PC-9 (cell line): ENCODE measurements at regions of chr3 and their contacts with region 1.

Region 1: DNA sequence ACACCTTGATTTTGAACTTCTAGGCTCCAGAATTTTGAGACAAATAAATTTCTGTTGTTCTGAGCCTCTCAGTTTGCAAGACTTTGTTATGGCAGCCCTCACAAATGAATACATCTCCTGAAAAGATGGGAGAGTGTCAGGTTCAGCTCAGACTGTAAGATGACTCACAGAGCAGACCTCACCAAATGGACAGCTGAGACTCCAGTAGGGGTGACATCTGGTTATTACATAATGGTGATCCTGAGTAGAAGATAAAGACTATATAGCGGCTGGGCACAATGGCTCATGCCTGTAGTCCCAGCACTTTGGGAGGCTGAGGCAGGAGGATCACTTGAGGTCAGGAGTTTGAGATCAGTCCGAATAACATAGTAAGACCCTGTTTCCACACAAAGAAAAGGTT is 26.2 kb upstream of the MTMR14 start:
- DNase-seq: peak in 1 of 2 experiments; percentile 52
- H3K4me3 ChIP-seq: no peak overlapping the region
- H3K27ac ChIP-seq: no peak overlapping the region
- H3K4me1 ChIP-seq: peaks cover 10% of the 10 kb centered on the region; the same call in 1 of the 2 replicates
- H3K27me3 ChIP-seq: no peaks in the 10 kb centered on the region
- CTCF ChIP-seq: no peak

Region 2: DNA sequence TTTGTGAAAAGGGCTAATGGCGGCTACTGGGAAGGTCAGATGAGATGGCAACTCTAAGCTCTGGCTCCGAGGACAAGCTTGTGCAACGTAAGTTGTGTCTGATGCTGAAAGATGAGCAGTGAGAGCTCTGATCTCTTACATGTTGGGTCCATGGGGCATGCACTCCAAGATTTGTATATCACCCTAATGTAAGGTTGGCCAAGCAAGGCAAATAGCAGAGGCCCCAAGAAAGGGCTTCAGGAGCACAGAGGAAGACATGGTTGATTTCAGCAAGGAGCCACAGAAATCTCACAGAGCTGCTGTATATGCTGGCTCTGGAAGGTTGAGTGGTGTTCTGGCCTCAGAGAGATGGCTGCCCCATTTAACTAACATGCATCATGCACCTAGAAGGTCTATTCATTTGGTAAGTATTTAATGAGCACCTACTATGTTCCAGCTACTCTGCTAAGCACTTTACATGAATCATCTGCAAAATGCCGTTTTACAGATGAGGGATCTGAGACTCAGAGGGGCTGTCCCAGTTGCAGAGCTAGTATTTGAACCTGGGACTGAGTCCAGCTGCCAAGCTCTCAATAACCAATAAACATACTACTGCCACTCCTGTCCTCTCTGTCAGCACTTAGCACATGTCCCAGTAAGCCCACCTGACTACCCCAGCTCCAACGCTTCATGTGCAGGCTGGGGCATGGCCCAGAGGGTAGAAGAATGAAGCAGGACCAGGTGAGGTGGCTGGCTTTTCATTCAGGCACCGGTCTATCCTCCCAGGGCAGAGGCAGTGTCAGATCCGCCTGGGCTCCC is 910.0 kb after region 1 on chr3:
- CTCF ChIA-PET with region 1: no interaction called
- POLR2A ChIA-PET with region 1: interaction called, 24 read pairs
- intact Hi-C with region 1: no loop called
- DNase-seq: no peak
- H3K4me3 ChIP-seq: no peak overlapping the region
- H3K27ac ChIP-seq: no peak overlapping the region
- H3K4me1 ChIP-seq: no peaks in the 10 kb centered on the region
- H3K27me3 ChIP-seq: peaks cover 76% of the 10 kb centered on the region
- CTCF ChIP-seq: no peak